RWPE1 (cell line): ENCODE measurements at regions of chr19 and their contacts with region 1.

Region 1: GRCh38 chr19:53792721-53793433 is 31.2 kb downstream of the NLRP12 start:
- DNase-seq: peak; percentile 79
- H3K27ac ChIP-seq: no peak overlapping the region
- CTCF ChIP-seq: peak; percentile 95

Region 2: GRCh38 chr19:53772943-53773342 is 19.9 kb before region 1 on chr19:
- CTCF ChIA-PET with region 1: interaction called, 12 read pairs
- POLR2A ChIA-PET with region 1: no interaction called
- DNase-seq: peak; percentile 26
- H3K27ac ChIP-seq: no peak overlapping the region
- CTCF ChIP-seq: peak; percentile 56